ENCODE measurements at regions of chr20 and their contacts with region 1.

Region 1: DNA sequence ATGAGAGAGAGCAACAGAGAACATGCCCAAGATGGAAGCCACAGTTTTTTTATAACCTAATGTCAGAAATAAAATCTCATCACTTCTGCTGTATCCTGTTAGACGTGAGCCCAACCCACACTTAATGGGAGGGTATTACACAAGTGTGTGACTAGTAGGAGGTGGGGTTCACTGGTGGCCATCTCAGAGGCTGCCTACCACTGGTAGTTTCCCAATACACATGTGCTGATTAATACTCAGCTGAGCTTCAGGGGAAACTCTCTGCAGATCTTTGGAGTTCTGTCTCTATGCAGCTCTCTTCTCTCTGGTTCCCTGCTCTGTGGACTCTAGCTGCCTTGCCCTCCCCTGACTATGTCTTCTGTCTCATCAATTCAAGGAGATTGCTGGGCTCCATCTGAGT is 35.7 kb downstream of the CNBD2 start:
- DNase-seq: no peak
- H3K4me3 ChIP-seq: no peak overlapping the region
- H3K27ac ChIP-seq: no peak overlapping the region
- H3K4me1 ChIP-seq: no peaks in the 10 kb centered on the region
- H3K27me3 ChIP-seq: no peaks in the 10 kb centered on the region
- CTCF ChIP-seq: no peak
- EP300 ChIP-seq: no peak
- POLR2A ChIP-seq: no peak

Region 2: GRCh38 chr20:35629427-35630145 is 374.5 kb before region 1 on chr20:
- intact Hi-C with region 1: no loop called
- DNase-seq: no peak
- H3K4me3 ChIP-seq: no peak overlapping the region
- H3K27ac ChIP-seq: no peak overlapping the region
- H3K4me1 ChIP-seq: no peaks in the 10 kb centered on the region
- H3K27me3 ChIP-seq: no peaks in the 10 kb centered on the region
- CTCF ChIP-seq: no peak
- EP300 ChIP-seq: no peak
- POLR2A ChIP-seq: no peak

Region 3: GRCh38 chr20:36447101-36447500 is 443.1 kb after region 1 on chr20:
- intact Hi-C with region 1: loop called in 1 of 4 experiments (anchors 10 kb)
- DNase-seq: no peak
- H3K4me3 ChIP-seq: no peak overlapping the region
- H3K27ac ChIP-seq: no peak overlapping the region
- H3K4me1 ChIP-seq: no peaks in the 10 kb centered on the region
- H3K27me3 ChIP-seq: no peaks in the 10 kb centered on the region
- CTCF ChIP-seq: no peak
- EP300 ChIP-seq: no peak
- POLR2A ChIP-seq: no peak